Tibial artery (tissue), 4 donors: ENCODE measurements at regions of chr2 and their contacts with region 1.

Region 1: GRCh38 chr2:36348721-36349120 is 6.9 kb upstream of the CRIM1 start:
- DNase-seq: no peak
- H3K4me3 ChIP-seq: no peak overlapping the region
- H3K27ac ChIP-seq: no peak overlapping the region
- H3K4me1 ChIP-seq: peaks cover 0 to 22% (median 9%) of the 10 kb centered on the region in 4 donors
- H3K27me3 ChIP-seq: no peaks in the 10 kb centered on the region
- CTCF ChIP-seq: no peak

Region 2: GRCh38 chr2:36322108-36322507 is 26.6 kb before region 1 on chr2:
- intact Hi-C with region 1: no loop called
- DNase-seq: no peak
- H3K4me3 ChIP-seq: no peak overlapping the region
- H3K27ac ChIP-seq: no peak overlapping the region
- H3K4me1 ChIP-seq: no peaks in the 10 kb centered on the region
- H3K27me3 ChIP-seq: no peaks in the 10 kb centered on the region
- CTCF ChIP-seq: peak in 1 of 2 experiments; percentile 8

Region 3: DNA sequence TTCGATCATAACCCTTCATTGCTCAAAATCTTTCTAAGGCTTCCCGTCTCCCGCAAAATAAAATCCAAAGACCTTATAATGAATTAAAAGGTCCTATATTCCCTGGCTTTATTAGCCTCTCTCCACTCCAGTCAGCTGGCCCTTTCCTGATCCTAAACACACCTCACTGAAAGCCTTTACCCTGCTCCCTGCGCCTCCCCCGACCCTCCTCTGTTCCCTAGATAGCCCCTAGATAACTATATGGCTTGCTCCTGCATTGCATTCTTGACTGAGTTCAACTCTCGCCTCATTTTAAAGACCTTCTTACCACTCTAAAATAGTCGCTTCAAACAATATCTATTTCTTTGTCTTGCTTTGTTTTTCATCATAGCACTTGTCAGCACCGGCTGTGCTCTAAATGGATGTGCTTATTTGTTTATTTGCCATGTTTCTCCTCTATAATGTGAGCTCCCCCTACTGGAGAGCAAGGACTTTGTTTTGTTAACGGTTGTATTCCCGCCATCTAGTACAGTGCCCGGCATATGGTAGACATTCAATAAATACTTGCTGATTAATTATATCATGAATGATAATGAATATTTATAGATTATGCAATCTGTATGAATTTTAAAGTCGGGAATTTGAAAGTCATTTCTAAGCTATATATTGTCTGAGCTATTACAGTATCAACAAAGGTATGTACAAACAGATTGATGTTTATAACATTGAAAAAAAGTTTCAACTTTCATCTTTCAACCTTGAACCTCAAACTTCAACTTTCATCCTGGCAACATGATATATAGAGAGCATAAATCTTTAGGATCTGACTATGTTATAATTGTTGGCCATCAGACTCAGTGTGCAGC is 315.4 kb after region 1 on chr2:
- intact Hi-C with region 1: loop called (anchors 5 kb)
- DNase-seq: no peak
- H3K4me3 ChIP-seq: no peak overlapping the region
- H3K27ac ChIP-seq: no peak overlapping the region
- H3K4me1 ChIP-seq: peaks cover 0 to 10% (median 1%) of the 10 kb centered on the region in 4 donors
- H3K27me3 ChIP-seq: no peaks in the 10 kb centered on the region
- CTCF ChIP-seq: peak; percentile 75 to 80